Activated T-helper 1 cell treated with anti-CD3 and anti-CD28 coated beads, Interleukin-12 subunit alpha, Interleukin-12 subunit beta, Interleukin-2, Interleukin-4 antibody, amounts not matched to agents 30 ng/mL and 10 ng/mL and 1 ng/mL, durations not matched to agents 14 hours and 24 hours and 36 hours (primary cell): ENCODE measurements at regions of chr11 and their contacts with region 1.

Region 1: DNA sequence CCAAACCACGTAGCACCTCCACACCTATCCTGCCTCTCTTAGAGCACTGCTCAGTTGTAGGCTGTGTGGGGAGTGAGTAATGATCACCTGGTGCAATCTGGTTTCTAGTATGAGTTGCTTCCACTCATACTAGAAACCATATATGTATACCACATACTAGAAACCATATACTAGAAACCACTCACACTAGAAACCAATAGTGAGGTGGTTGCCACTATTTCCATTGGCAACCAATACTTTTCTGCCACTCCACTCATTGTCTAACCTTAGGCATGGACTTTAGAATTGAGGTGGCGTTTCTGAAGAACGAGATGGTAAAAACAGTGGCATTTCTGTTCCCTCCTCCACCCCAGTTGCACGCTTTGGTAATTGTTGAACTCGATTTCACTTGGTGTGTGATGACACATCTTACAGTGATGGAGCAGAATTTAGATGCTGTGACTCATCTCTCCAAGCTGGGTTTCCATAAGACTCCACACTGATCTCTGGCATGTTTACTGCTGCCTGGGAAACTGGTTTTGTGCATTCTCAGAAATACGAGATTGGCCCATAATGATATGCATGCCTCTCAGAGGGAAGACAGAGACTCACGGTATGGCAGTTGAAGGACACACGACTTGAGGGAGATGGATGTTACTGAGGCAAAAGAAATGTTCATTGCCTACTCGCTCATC is 82.9 kb downstream of the KIRREL3 start:
- DNase-seq: no peak
- H3K4me3 Mint-ChIP-seq: no peak overlapping the region
- H3K27ac Mint-ChIP-seq: no peak overlapping the region
- H3K4me1 Mint-ChIP-seq: no peaks in the 10 kb centered on the region
- H3K27me3 Mint-ChIP-seq: no peaks in the 10 kb centered on the region

Region 2: DNA sequence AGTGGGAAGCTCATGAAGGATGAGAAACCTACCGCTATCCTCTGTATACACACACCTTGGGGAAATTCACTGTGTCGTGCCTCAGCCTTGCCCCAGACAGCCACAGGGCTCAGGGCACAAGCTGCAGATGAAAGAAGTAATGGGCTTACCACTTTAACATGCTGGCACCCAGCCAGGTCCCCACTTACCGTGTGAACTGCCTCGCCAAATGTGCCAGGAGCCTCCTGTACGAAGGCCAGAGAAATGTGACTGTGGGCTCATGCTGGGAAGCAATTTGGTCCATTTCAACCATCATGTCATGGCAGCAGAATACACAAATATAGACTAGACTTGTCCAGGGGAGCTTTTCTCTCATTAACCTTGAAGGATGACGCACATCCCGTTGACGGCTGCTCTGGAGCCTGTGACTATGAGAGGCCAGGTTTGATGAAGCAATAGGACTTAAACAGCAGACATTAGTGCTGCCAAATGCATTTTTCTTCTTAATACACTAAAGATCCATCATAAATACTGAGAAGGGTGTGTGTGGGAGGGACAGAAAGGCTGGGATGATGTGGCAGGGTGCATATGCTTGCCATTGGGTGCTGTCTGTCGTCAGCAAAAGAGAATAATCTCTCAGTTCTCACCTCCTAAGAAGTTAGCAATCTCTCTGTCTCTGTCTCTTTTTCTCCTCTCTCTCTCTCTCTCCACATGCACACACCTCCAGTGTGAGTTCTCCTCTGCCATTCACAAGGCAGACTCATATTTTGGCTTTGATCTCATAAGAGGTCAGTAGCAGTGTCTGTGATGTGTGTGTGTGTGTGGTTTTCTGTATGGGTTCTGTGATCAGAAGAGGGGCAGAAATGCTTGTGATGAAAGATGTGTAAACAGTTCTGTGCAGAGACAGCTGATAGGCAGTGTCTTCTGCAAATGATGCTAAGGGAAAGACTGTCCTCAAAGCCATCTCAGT is 59.5 kb before region 1 on chr11:
- intact Hi-C with region 1: loop called (anchors 2 kb)
- DNase-seq: no peak
- H3K4me3 Mint-ChIP-seq: no peak overlapping the region
- H3K27ac Mint-ChIP-seq: no peak overlapping the region
- H3K4me1 Mint-ChIP-seq: no peaks in the 10 kb centered on the region
- H3K27me3 Mint-ChIP-seq: no peaks in the 10 kb centered on the region